ENCODE measurements at regions of chr1 and their contacts with region 1.

Region 1: DNA sequence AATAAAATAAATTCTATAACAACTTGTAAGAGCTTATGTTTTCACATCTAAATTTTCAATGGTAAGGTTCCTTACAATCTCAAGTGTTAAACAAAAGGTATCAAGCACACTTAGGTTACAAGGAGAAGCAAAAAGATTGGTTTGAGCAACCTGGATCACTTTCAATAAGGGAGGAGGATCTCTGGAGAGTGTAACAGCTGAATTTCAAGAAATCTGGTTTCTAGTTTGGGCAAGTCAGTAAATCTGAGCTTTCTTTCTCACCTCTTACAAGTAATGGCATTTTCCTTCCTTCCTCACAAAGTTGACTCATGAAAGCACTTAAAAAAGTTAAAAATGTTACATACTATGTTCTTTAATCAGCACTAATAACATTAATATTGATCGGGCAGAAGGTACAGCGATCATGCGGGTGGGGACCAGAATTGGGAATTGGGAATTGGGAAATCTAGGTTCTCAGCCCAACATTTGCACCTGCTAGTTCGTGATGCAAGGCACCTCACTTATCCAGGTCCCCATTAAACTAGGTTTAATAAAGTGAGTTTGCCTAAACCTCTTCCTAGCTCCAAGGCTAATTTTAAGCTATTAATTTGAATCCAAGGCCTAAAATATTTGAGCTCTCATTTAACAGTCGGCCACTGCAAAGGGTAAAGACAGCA is 3.1 kb downstream of the NUCKS1 start:
- DNase-seq: no peak

Region 2: GRCh38 chr1:205440476-205441317 is 306.2 kb before region 1 on chr1:
- intact Hi-C with region 1: no loop called
- DNase-seq: peak in 2 of 10 donors; percentile 66 to 92

Region 3: DNA sequence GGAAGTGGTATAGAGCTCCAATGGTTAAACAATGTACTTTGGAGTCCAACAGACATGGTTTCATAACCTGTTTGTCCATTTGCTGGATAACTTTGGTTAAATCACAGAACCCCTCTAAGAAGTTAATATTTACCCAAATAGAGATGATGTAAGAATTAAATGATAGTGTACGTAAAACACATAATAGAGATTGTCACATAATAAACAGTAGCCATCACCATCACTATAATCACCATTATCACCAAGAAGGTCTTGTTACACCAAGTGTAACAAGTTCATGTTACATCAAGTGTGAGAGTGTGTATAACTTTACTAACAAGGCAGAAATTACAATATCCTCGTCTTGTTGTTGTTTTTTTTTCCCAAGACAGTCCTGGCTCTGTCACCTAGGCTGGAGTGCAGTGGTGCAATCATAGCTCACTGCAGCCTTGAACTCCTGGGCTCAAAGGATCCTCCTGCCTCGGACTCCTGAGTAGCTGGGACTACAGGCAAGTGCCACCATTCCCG is 20.2 kb before region 1 on chr1:
- intact Hi-C with region 1: loop called (anchors 2 kb)
- DNase-seq: no peak